ENCODE measurements at regions of chr3 and their contacts with region 1.

Region 1: DNA sequence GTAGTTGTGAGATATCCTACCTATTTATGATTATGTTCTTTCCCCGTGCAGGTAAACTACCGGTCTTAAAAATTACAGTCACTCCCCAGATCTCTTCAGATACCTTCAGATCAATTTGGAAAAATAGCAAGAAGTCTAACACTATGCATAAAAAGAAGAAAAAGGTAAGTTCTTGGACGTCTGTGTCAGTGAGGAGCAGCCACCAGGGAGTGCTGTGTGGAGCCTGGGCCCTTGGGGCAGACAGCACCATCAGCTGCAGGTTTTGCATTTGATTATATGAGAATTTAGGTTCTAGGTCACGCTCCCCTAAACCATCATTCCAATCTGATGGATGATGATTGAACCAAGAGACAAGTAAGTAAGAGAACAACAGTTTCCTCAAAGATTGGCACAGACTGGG is 8.9 kb upstream of the RNF7 start:
- DNase-seq: no peak
- ATAC-seq: peak; percentile 34; the same call in 1 of the 2 replicates
- H3K4me3 ChIP-seq: no peak overlapping the region
- H3K27ac ChIP-seq: no peak overlapping the region
- H3K4me1 ChIP-seq: no peaks in the 10 kb centered on the region
- H3K27me3 ChIP-seq: no peaks in the 10 kb centered on the region
- CTCF ChIP-seq: peak; percentile 43

Region 2: DNA sequence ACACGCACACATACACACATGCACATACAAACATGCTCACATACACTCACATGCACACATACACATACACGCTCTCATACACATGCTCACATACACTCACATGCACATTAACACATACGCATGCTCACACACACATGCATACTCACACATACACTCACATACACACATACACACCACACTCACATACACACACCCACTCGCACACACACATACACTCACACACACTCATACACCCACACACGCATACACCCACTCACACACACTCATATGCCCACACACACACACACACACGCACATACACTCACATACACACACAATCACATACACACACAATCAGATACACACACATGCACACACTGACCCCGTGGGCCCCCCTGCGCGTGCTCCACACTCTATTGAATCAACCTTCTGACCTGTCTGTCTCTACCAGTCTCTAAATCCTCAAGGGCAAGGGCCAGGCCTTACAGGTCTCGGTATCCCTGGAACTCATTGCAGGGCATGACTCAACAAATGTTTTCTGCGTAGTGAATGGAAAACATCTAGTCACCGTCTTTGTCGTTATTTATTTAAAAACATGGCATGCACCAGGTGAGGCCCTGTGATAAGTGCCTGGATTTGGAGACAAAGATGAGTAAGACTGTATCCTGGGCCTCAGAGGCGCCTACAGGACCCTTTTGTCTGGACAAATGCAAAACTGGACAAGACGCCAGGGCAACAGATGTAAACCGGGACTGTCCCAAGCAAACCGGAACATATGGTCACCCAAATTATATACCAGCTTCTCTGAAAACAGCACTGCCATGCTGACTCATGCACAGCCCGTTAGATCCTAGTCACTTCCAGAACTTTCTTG is 75.8 kb after region 1 on chr3:
- CTCF ChIA-PET with region 1: no interaction called
- POLR2A ChIA-PET with region 1: interaction called, 10 read pairs
- in situ Hi-C with region 1: no loop called
- intact Hi-C with region 1: no loop called
- DNase-seq: no peak
- ATAC-seq: no peak
- H3K4me3 ChIP-seq: no peak overlapping the region
- H3K27ac ChIP-seq: no peak overlapping the region
- H3K4me1 ChIP-seq: no peaks in the 10 kb centered on the region
- H3K27me3 ChIP-seq: no peaks in the 10 kb centered on the region
- CTCF ChIP-seq: no peak

Region 3: DNA sequence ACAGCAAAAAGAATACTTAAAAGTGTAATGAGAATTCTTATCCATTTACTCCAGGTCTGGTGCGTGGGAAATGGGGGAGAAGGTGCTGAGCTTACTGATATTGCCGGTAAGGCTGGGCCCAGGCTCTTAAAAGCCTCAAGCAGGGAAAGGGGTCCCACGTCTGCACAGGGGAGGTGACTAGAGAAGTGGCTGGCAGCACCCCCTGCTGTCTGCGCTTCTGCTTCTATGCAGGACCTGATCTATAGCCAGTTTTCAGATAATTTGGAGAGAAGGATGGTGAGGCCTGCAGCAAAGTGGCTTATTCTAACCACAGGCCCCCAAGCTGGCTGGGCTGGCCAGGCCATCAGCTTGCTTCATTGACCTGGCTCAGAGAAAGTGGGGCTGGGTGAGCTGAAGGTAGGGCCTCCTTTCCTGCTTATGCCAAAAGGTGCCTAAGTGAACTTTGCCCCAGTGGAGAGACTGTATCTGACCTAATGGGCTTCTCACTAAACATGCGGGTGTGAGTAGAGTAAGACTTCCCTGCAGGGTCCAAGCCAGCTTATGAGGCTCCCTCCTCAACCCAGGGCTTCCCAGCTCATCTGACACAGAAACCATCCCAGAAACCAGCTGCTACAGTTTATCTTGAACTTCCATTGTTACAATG is 116.3 kb after region 1 on chr3:
- CTCF ChIA-PET with region 1: no interaction called
- POLR2A ChIA-PET with region 1: no interaction called
- in situ Hi-C with region 1: no loop called
- intact Hi-C with region 1: no loop called
- DNase-seq: no peak
- ATAC-seq: no peak
- H3K4me3 ChIP-seq: no peak overlapping the region
- H3K27ac ChIP-seq: no peak overlapping the region
- H3K4me1 ChIP-seq: no peaks in the 10 kb centered on the region
- H3K27me3 ChIP-seq: no peaks in the 10 kb centered on the region
- CTCF ChIP-seq: no peak

Region 4: DNA sequence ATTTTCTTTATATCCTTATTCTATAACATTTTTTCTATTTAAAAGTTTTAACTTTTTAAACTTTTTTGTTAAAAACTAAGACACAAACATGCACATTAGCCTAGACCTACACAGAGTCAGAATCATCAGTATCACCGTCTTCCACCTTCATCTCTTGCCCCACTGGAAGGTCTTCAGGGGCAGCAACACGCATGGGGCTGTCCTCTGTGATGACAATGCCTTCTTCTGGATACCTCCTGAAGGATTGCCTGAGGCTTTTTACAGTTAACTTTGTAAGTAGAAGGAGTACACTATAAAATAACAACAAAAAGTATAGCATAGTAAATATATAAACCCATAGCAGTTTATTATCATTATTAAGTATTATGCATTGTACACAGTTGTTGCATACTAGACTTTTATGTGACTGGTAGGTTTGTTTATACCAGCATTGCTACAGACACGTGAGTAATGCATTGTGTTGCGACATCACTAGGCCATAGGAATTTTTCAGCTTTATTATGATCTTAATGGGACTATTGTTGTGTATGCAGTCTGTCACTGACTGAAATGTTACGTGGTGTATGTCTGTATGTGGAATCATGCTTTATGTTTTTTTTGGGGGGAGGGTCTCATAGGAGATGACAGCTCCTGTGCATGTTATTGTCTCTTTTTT is 165.4 kb after region 1 on chr3:
- CTCF ChIA-PET with region 1: no interaction called
- POLR2A ChIA-PET with region 1: interaction called, 13 read pairs
- in situ Hi-C with region 1: no loop called
- intact Hi-C with region 1: no loop called
- DNase-seq: no peak
- ATAC-seq: peak; percentile 62; the same call in 1 of the 2 replicates
- H3K4me3 ChIP-seq: no peak overlapping the region
- H3K27ac ChIP-seq: no peak overlapping the region
- H3K4me1 ChIP-seq: peaks cover 4% of the 10 kb centered on the region; the same call in 1 of the 2 replicates
- H3K27me3 ChIP-seq: no peaks in the 10 kb centered on the region
- CTCF ChIP-seq: no peak

Region 5: GRCh38 chr3:142239421-142239820 is 510.2 kb after region 1 on chr3:
- CTCF ChIA-PET with region 1: no interaction called
- POLR2A ChIA-PET with region 1: no interaction called
- in situ Hi-C with region 1: no loop called
- intact Hi-C with region 1: no loop called
- DNase-seq: no peak
- ATAC-seq: no peak
- H3K4me3 ChIP-seq: no peak overlapping the region
- H3K27ac ChIP-seq: no peak overlapping the region
- H3K4me1 ChIP-seq: no peaks in the 10 kb centered on the region
- H3K27me3 ChIP-seq: peaks cover 9% of the 10 kb centered on the region; the same call in 1 of the 2 replicates
- CTCF ChIP-seq: no peak